HEK293T (cell line): ENCODE measurements at regions of chr7 and their contacts with region 1.

Region 1: DNA sequence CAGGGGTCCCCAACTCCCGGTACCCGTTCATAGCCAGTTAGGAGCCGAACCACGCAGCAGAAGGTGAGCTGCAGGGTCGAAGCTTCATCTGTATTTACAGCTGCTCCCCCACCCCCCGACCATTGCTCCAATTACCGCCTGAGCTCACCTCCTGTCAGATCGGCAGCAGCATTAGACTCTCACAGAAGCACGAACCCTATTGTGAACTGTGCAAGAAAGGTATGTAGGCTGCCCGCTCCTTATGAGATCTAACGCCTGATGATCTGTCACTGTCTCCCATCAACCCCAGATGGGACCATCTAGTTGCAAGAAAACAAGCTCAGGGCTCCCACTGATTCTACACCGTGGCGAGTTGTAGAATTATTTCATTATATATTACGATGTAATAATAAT is 14.6 kb upstream of the AZGP1 start:
- DNase-seq: no peak

Region 2: GRCh38 chr7:99876491-99876890 is 114.0 kb before region 1 on chr7:
- CTCF ChIA-PET with region 1: no interaction called
- POLR2A ChIA-PET with region 1: no interaction called
- DNase-seq: no peak

Region 3: DNA sequence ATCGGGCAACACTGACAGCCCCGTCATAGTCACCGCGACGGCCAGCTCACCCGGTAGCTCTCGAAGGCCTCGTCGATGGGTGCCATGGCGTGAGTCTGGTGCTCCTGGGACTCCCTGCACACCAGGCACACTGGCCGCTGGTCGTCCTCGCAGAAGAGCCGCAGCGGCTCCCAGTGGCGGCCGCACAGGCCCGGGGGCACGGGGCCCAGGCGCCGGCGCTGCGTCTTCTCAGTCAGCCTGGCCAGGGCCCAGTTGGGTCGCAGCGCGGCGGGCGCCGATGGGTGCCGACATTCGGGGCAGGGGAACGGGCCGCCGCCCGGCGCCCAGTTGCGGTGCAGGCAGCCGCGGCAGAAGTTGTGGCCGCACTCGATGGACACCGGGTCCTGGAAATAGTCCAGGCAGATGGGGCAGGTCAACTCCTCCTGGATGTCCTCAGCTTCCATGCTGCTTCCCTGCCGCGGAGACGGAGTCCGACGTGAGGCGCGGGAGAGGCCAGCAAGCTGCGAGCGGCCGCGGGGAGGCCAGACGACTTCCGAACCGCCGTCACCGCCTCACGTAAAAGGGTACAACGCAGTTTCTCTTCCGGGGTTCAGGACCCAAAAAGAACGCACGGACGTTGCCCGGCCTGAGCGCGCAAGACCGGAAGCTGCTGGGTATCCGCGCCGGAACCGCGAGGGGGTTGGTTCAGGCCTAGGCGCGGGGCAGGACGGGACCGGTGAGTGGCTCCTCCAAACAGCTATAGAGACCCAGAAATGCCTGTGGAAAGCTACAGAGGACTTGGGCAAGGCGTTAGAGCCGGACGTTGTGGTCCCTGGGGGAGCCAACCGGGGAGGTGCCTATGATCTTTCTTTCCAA is 71.3 kb before region 1 on chr7 and contains the start of gene TRIM4:
- CTCF ChIA-PET with region 1: interaction called, 23 read pairs
- POLR2A ChIA-PET with region 1: interaction called, 4 read pairs
- DNase-seq: peak; percentile 81